ENCODE measurements at regions of chr10 and their contacts with region 1.

Region 1: GRCh38 chr10:92742331-92743228 is 52.8 kb downstream of the HHEX start:
- DNase-seq: no peak
- H3K4me3 ChIP-seq: no peak overlapping the region
- H3K27ac ChIP-seq: no peak overlapping the region
- H3K4me1 ChIP-seq: no peaks in the 10 kb centered on the region
- H3K27me3 ChIP-seq: no peaks in the 10 kb centered on the region
- CTCF ChIP-seq: no peak

Region 2: GRCh38 chr10:91313796-91314485 is 1428.6 kb before region 1 on chr10:
- CTCF ChIA-PET with region 1: no interaction called
- POLR2A ChIA-PET with region 1: no interaction called
- intact Hi-C with region 1: no loop called
- DNase-seq: no peak
- H3K4me3 ChIP-seq: no peak overlapping the region
- H3K27ac ChIP-seq: no peak overlapping the region
- H3K4me1 ChIP-seq: no peaks in the 10 kb centered on the region
- H3K27me3 ChIP-seq: no peaks in the 10 kb centered on the region
- CTCF ChIP-seq: no peak

Region 3: DNA sequence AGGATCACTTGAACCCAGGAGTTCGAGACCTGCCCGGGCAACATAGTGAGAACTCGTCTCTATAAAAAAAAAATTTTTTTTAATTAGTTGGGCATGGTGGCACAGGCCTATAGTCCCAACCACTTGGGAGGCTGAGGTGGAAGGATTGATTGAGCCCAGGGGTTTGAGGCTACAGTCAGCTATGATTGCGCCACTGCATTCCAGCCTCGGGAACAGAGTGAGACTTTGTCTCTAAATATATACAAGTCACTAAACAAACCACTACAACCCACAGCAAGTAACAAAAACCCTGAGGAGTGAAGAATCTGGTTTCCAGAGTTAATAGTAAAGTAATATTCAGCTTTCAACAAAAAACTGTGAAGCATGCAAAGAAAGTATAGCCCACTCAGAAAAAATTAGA is 85.6 kb before region 1 on chr10:
- CTCF ChIA-PET with region 1: no interaction called
- POLR2A ChIA-PET with region 1: no interaction called
- intact Hi-C with region 1: no loop called
- DNase-seq: no peak
- H3K4me3 ChIP-seq: no peak overlapping the region
- H3K27ac ChIP-seq: no peak overlapping the region
- H3K4me1 ChIP-seq: no peaks in the 10 kb centered on the region
- H3K27me3 ChIP-seq: no peaks in the 10 kb centered on the region
- CTCF ChIP-seq: no peak

Region 4: DNA sequence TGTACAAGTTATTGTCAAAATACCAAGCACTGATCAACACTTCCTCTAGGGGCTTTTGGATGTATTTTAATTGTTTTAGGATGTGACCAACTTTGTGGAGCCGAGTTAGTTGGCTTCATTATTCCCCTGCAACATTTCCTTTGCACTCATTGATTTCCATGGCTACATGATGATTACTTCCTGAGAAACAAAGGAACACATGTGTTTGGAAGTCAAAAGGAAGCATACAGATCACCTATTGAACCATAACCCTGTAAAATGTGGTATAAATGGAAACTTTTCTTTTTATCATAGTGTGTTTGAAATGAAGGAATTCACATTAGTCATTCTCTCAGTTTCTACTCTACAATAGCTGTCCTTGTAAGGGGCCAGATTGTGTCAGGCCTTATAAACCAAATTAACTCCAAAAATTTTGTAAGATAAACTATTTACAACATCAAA is 73.5 kb after region 1 on chr10:
- CTCF ChIA-PET with region 1: no interaction called
- POLR2A ChIA-PET with region 1: interaction called, 16 read pairs
- intact Hi-C with region 1: no loop called
- DNase-seq: peak in 1 of 2 experiments; percentile 49
- H3K4me3 ChIP-seq: no peak overlapping the region
- H3K27ac ChIP-seq: no peak overlapping the region
- H3K4me1 ChIP-seq: no peaks in the 10 kb centered on the region
- H3K27me3 ChIP-seq: no peaks in the 10 kb centered on the region
- CTCF ChIP-seq: no peak